ENCODE measurements at regions of chr4 and their contacts with region 1.

Region 1: DNA sequence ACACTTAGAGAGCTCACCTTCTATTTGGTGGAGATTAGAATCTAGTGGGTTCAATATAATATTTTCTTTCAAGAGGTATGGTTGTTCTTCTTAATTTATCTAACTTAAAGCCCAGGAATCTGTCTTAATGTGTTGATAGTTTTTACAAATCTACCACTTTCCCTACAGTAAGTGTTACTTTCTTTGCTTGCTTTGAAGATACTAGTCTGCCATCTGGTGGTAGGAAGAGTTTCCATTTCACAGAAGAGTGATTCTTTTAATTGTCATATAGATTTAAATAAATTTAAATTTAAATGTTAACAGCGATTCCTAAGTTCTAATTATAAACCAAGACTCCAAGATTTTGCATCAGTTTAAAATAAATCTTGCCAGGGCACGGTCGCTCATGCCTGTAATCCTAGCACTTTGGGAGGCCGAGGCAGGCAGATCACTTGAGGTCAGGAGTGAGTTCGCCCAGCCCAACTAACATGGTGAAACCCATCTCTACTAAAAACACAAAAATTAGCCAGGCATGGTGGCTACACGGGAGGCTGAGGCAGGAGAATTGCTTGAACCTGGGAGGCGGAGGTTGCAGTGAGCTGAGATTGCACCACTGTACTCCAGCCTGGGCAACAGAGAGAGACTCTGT is 43.5 kb downstream of the NUDT9 start:
- DNase-seq: peak; percentile 29
- H3K4me3 ChIP-seq: no peak overlapping the region
- H3K27ac ChIP-seq: no peak overlapping the region
- H3K4me1 ChIP-seq: no peaks in the 10 kb centered on the region
- H3K27me3 ChIP-seq: no peaks in the 10 kb centered on the region
- CTCF ChIP-seq: peak; percentile 56

Region 2: GRCh38 chr4:86633854-86634253 is 832.0 kb before region 1 on chr4:
- CTCF ChIA-PET with region 1: no interaction called
- POLR2A ChIA-PET with region 1: no interaction called
- intact Hi-C with region 1: no loop called
- DNase-seq: no peak
- H3K4me3 ChIP-seq: no peak overlapping the region
- H3K27ac ChIP-seq: no peak overlapping the region
- H3K4me1 ChIP-seq: peaks cover 7% of the 10 kb centered on the region
- H3K27me3 ChIP-seq: no peaks in the 10 kb centered on the region
- CTCF ChIP-seq: no peak

Region 3: GRCh38 chr4:86957214-86957613 is 508.6 kb before region 1 on chr4:
- CTCF ChIA-PET with region 1: no interaction called
- POLR2A ChIA-PET with region 1: no interaction called
- intact Hi-C with region 1: no loop called
- DNase-seq: no peak
- H3K4me3 ChIP-seq: no peak overlapping the region
- H3K27ac ChIP-seq: no peak overlapping the region
- H3K4me1 ChIP-seq: peaks cover 36% of the 10 kb centered on the region
- H3K27me3 ChIP-seq: no peaks in the 10 kb centered on the region
- CTCF ChIP-seq: no peak

Region 4: DNA sequence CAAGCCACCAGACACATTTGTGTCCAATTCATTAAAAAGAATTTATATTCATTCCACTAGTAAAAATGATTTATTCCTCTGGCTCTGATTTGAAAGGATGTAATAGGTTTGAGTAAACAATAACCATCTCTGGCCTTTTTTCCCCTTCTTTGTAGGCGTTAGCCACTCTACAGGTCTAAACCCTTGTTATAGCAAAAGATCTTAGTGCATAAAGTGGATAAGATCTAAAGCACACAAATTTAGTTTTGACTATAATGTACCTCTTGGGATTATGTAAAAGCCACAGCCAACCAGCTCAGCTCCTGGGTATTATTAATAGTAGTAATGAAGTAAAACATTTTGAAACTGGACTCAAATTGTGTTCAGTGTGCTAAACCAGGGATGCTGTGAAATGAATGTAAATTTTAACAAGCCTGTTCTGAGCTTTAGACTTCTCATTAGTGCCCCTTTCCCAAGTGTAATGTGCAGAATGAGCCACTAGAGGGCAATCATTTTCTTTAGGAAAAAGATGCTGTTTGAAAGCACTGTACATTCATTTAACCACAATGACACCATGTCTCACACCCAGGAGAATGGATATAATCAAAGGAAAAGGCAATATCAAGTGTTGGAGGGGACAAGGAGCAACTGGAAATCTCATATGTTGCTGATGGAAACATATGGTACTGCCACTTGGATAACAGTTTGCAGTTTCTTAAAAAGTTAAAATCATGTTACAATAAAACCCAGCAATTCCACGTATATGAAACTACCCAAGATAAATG is 315.2 kb before region 1 on chr4:
- CTCF ChIA-PET with region 1: no interaction called
- POLR2A ChIA-PET with region 1: no interaction called
- intact Hi-C with region 1: loop called (anchors 10 kb)
- DNase-seq: peak; percentile 74
- H3K4me3 ChIP-seq: no peak overlapping the region
- H3K27ac ChIP-seq: no peak overlapping the region
- H3K4me1 ChIP-seq: peaks cover 8% of the 10 kb centered on the region
- H3K27me3 ChIP-seq: no peaks in the 10 kb centered on the region
- CTCF ChIP-seq: peak; percentile 70

Region 5: GRCh38 chr4:87270144-87270543 is 195.7 kb before region 1 on chr4:
- CTCF ChIA-PET with region 1: no interaction called
- POLR2A ChIA-PET with region 1: no interaction called
- intact Hi-C with region 1: loop called (anchors 2 kb)
- DNase-seq: peak; percentile 51
- H3K4me3 ChIP-seq: no peak overlapping the region
- H3K27ac ChIP-seq: no peak overlapping the region
- H3K4me1 ChIP-seq: no peaks in the 10 kb centered on the region
- H3K27me3 ChIP-seq: no peaks in the 10 kb centered on the region
- CTCF ChIP-seq: peak; percentile 66

Region 6: GRCh38 chr4:87363567-87363966 is 102.3 kb before region 1 on chr4:
- CTCF ChIA-PET with region 1: no interaction called
- POLR2A ChIA-PET with region 1: no interaction called
- intact Hi-C with region 1: loop called (anchors 5 kb)
- DNase-seq: peak; percentile 20
- H3K4me3 ChIP-seq: no peak overlapping the region
- H3K27ac ChIP-seq: no peak overlapping the region
- H3K4me1 ChIP-seq: no peaks in the 10 kb centered on the region
- H3K27me3 ChIP-seq: no peaks in the 10 kb centered on the region
- CTCF ChIP-seq: no peak

Region 7: DNA sequence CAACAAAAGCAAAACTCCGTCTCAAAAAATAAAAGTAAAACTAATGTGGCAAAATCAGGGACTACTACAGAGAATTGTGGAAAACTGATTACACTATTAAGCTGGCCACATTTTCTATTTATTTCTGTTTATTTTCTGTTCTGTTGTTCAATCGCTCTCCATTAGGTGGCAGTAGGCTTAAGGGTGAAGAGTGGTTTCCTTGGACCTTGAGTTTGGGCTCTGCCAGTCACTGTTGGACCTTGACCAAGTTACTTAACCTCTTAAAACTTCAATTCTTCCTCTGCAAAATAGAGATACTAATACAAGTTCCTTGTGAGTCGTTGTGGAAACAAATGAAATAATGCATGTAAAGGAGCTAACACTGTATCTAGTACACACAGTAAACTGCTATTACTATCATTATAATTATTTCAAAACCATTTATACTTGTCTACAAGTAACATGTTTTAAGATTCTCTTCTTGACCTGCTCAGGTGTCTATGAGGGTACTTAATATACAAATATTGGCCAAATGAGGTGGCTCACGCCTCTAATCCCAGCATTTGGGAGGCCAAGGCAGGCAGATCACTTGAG is 90.0 kb before region 1 on chr4:
- CTCF ChIA-PET with region 1: no interaction called
- POLR2A ChIA-PET with region 1: no interaction called
- intact Hi-C with region 1: loop called (anchors 5 kb)
- DNase-seq: peak; percentile 35
- H3K4me3 ChIP-seq: no peak overlapping the region
- H3K27ac ChIP-seq: no peak overlapping the region
- H3K4me1 ChIP-seq: no peaks in the 10 kb centered on the region
- H3K27me3 ChIP-seq: no peaks in the 10 kb centered on the region
- CTCF ChIP-seq: peak; percentile 66

Measured in A673 (cell line).